ENCODE measurements at regions of chr5 and their contacts with region 1.

Region 1: GRCh38 chr5:178075840-178076548 is 37.3 kb upstream of the N4BP3 start:
- DNase-seq: peak; percentile 88
- H3K4me3 Mint-ChIP-seq: no peak overlapping the region
- H3K27ac Mint-ChIP-seq: no peak overlapping the region
- H3K4me1 Mint-ChIP-seq: peaks cover 3% of the 10 kb centered on the region
- H3K27me3 Mint-ChIP-seq: no peaks in the 10 kb centered on the region

Region 2: GRCh38 chr5:178113199-178113787 is 37.3 kb after region 1 on chr5 and contains the start of gene N4BP3:
- CTCF ChIA-PET with region 1: interaction called, 12 read pairs
- intact Hi-C with region 1: loop called (anchors 1 kb)
- DNase-seq: peak; percentile 88
- H3K4me3 Mint-ChIP-seq: peak within 1 kb of the TSS; percentile 88
- H3K27ac Mint-ChIP-seq: no peak within 1 kb of the TSS
- H3K4me1 Mint-ChIP-seq: peaks cover 31% of the 10 kb centered on the region
- H3K27me3 Mint-ChIP-seq: no peaks in the 10 kb centered on the region
- total RNA-seq, gene N4BP3: 1.4 to 1.6 TPM

Region 3: DNA sequence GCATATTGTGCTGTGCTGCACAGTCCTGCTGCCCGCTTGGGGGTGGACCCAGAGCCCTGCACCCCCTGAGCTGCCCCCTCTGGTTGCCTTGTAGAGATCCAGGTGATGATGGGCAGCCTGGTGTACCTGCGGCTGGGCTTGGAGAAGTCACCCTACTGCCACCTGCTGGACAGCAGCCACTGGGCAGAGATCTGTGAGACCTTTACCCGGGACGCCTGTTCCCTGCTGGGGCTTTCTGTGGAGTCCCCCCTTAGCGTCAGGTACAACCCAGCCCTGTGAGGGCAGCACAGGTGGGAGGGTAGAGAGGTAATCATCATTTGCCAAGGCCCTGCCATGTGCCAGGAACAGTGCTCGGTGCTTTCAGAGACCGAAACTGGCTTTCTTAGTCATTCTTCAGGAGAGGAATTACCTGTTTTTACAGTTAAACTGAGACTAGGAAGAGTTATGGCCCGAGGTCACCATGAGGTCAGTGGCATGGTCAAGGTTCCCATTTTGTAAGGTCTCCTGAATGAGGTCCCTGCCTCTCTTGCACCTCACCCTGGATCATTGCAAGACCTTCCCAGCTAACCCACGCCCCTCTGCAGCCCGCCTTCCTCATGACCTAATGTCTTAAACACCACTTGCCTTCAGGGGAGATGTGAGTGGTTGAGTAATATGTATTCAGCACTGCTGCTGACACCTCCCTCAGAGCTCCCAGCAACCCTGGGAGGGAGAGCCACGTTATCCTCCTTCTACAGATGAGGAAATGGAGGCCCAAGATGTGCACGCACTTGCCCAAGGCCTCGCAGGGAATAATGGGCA is 70.2 kb after region 1 on chr5:
- CTCF ChIA-PET with region 1: interaction called, 76 read pairs
- intact Hi-C with region 1: loop called (anchors 1 kb)
- DNase-seq: peak; percentile 83
- H3K4me3 Mint-ChIP-seq: no peak overlapping the region
- H3K27ac Mint-ChIP-seq: peak overlapping the region; percentile 70
- H3K4me1 Mint-ChIP-seq: peaks cover 40% of the 10 kb centered on the region
- H3K27me3 Mint-ChIP-seq: no peaks in the 10 kb centered on the region

Region 4: DNA sequence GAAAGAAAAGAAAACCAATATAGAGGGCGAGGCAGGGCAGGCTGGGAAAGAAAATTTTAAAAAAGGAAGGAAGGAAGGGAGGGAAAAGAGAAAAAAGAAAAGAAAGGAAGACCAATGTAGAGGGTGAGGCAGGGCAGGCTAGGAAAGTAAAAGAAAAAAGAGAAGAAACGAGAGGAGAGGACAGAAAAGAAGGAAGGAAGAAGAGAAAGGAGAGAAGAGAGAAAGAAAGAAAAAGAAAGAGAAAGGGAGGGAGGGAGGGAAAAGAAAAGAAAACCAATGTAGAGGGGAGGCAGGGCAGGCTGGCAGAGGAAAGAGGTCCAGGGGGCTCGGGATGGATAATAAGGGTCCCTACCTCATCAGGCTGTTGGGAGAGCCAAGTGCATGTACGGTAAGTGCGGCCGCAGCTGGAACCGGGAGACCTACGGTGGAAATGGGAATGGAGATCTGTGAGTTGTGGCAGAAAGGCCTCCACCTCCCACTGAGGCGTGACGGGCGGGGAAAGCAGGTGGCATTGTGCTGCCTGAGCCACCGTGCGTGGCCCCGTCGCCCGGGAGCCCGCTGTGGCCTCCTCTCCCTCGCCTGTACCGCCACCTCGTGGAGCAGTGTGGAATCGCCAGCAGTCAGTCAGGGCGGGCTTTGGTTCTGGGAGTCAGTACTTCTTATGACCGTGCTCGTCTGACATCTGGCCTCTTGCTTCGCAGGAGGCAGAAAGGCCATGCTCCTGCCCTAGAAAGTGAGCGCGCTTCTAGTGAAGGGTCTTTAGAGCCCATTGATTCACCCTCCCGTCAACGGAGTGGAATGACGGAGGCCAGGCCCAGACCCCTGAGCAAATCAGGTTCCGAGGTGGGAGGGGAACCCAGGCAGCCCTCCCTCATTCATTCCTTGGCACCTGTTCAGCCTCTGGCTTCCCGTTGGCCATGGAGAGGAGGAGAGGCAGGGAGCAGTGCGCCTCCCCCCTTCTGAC is 88.1 kb after region 1 on chr5:
- CTCF ChIA-PET with region 1: interaction called, 51 read pairs
- intact Hi-C with region 1: loop called (anchors 1 kb)
- DNase-seq: peak; percentile 95
- H3K4me3 Mint-ChIP-seq: peak overlapping the region; percentile 38
- H3K27ac Mint-ChIP-seq: no peak overlapping the region
- H3K4me1 Mint-ChIP-seq: peaks cover 2% of the 10 kb centered on the region
- H3K27me3 Mint-ChIP-seq: peaks cover 11% of the 10 kb centered on the region

Measured in activated naive CD4-positive, alpha-beta T cell treated with anti-CD3 and anti-CD28 coated beads for 36 hours (primary cell).